Naive thymus-derived CD4-positive, alpha-beta T cell (primary cell): ENCODE measurements at regions of chr17 and their contacts with region 1.

Region 1: GRCh38 chr17:59155439-59156182 is at the start of gene PRR11:
- DNase-seq: peak in 6 of 9 donors; percentile 62 to 99 (median 98)
- ATAC-seq: peak; percentile 91
- H3K4me3 ChIP-seq: peak within 1 kb of the TSS; percentile 89
- H3K4me3 Mint-ChIP-seq: no peak within 1 kb of the TSS
- H3K27ac ChIP-seq: peak within 1 kb of the TSS; percentile 75
- H3K27ac Mint-ChIP-seq: no peak within 1 kb of the TSS
- H3K4me1 ChIP-seq: peaks cover 10 to 13% of the 10 kb centered on the region in 2 donors
- H3K4me1 Mint-ChIP-seq: peaks cover 8 to 52% (median 36%) of the 10 kb centered on the region in 7 donors
- H3K27me3 ChIP-seq: no peaks in the 10 kb centered on the region
- H3K27me3 Mint-ChIP-seq: no peaks in the 10 kb centered on the region
- total RNA-seq, gene PRR11: 0.61 to 41.9 (median 1.00) TPM

Region 2: GRCh38 chr17:58006924-58007780 is 1148.5 kb before region 1 on chr17 and contains the start of gene SRSF1:
- CTCF ChIA-PET with region 1: no interaction called
- POLR2A ChIA-PET with region 1: no interaction called
- intact Hi-C with region 1: loop called (anchors 2 to 5 kb)
- DNase-seq: peak; percentile 95 to 99 (median 98)
- ATAC-seq: peak; percentile 92
- H3K4me3 ChIP-seq: peak within 1 kb of the TSS; percentile 99
- H3K4me3 Mint-ChIP-seq: peak within 1 kb of the TSS; percentile 96 to 100 (median 99)
- H3K27ac ChIP-seq: peak within 1 kb of the TSS; percentile 93
- H3K27ac Mint-ChIP-seq: peak within 1 kb of the TSS; percentile 99 to 100 (median 99)
- H3K4me1 ChIP-seq: peaks cover 31 to 32% of the 10 kb centered on the region in 2 donors
- H3K4me1 Mint-ChIP-seq: peaks cover 33 to 60% (median 54%) of the 10 kb centered on the region in 7 donors
- H3K27me3 ChIP-seq: no peaks in the 10 kb centered on the region
- H3K27me3 Mint-ChIP-seq: peaks cover 0 to 3% (median 0%) of the 10 kb centered on the region in 5 donors
- total RNA-seq, gene SRSF1: 115 to 362 (median 249) TPM

Region 3: DNA sequence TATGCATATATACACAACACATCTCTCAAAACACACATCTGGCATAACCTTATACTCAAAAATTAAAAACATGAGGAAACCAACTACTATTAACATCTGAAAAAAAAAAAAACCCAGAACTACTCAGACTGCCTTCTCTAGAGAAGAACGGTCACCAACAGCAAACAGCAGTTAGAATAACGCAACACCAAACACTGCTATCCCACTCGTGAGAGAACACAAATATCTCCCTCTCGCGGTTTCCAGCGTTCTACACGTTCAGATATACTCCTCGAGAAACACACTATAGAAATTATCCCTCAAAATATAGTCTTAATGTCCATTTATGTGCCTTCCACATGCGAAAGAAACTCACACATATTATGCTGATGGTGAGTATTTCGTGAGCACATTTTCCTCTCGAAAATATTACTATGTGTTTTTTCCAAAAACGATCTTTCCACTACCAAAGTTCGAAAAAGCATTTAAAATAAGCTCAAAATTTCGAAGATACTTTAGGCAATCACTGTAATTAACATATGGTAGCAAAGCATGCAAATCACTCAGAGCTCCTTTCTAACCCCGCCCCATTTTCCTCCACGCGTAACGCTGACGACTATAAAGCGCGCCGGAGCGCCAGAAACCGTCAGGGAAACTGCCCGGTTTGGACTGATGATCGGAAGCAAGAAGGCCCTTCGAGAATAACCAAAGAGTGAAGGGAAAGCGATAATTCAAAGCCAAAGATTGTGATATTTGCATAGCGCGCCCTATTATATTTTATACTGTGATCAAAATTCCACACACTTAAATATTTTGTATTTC is 523.9 kb before region 1 on chr17:
- CTCF ChIA-PET with region 1: no interaction called
- POLR2A ChIA-PET with region 1: no interaction called
- intact Hi-C with region 1: loop called (anchors 1 to 2 kb)
- DNase-seq: peak; percentile 74 to 95 (median 92)
- ATAC-seq: peak; percentile 90
- H3K4me3 ChIP-seq: peak overlapping the region; percentile 46
- H3K4me3 Mint-ChIP-seq: no peak overlapping the region
- H3K27ac ChIP-seq: peak overlapping the region; percentile 78
- H3K27ac Mint-ChIP-seq: no peak overlapping the region
- H3K4me1 ChIP-seq: peaks cover 6 to 12% of the 10 kb centered on the region in 2 donors
- H3K4me1 Mint-ChIP-seq: peaks cover 0 to 9% (median 5%) of the 10 kb centered on the region in 7 donors
- H3K27me3 ChIP-seq: no peaks in the 10 kb centered on the region
- H3K27me3 Mint-ChIP-seq: peaks cover 0 to 2% (median 0%) of the 10 kb centered on the region in 5 donors

Region 4: GRCh38 chr17:59220376-59221158 is 65.0 kb after region 1 on chr17 and contains the start of gene GDPD1:
- CTCF ChIA-PET with region 1: no interaction called
- POLR2A ChIA-PET with region 1: interaction called, 3 read pairs
- intact Hi-C with region 1: loop called (anchors 1 kb)
- DNase-seq: peak; percentile 95 to 98 (median 97)
- ATAC-seq: peak; percentile 100
- H3K4me3 ChIP-seq: peak within 1 kb of the TSS; percentile 99
- H3K4me3 Mint-ChIP-seq: peak within 1 kb of the TSS; percentile 94 to 100 (median 98)
- H3K27ac ChIP-seq: peak within 1 kb of the TSS; percentile 92
- H3K27ac Mint-ChIP-seq: peak within 1 kb of the TSS; percentile 94 to 100 (median 98)
- H3K4me1 ChIP-seq: peaks cover 5 to 9% of the 10 kb centered on the region in 2 donors
- H3K4me1 Mint-ChIP-seq: peaks cover 5 to 16% (median 14%) of the 10 kb centered on the region in 7 donors
- H3K27me3 ChIP-seq: no peaks in the 10 kb centered on the region
- H3K27me3 Mint-ChIP-seq: peaks cover 0 to 5% (median 0%) of the 10 kb centered on the region in 5 donors
- total RNA-seq, gene GDPD1: 2.4 to 6.0 (median 3.8) TPM

Region 5: GRCh38 chr17:59506894-59507726 is 351.5 kb after region 1 on chr17:
- CTCF ChIA-PET with region 1: no interaction called
- POLR2A ChIA-PET with region 1: no interaction called
- intact Hi-C with region 1: no loop called
- DNase-seq: no peak
- ATAC-seq: no peak
- H3K4me3 ChIP-seq: no peak overlapping the region
- H3K4me3 Mint-ChIP-seq: no peak overlapping the region
- H3K27ac ChIP-seq: no peak overlapping the region
- H3K27ac Mint-ChIP-seq: no peak overlapping the region
- H3K4me1 ChIP-seq: no peaks in the 10 kb centered on the region
- H3K4me1 Mint-ChIP-seq: no peaks in the 10 kb centered on the region
- H3K27me3 ChIP-seq: no peaks in the 10 kb centered on the region
- H3K27me3 Mint-ChIP-seq: peaks cover 0 to 5% (median 4%) of the 10 kb centered on the region in 5 donors

Region 6: GRCh38 chr17:59707114-59707970 is 551.7 kb after region 1 on chr17 and contains the starts of genes PTRH2 and VMP1:
- CTCF ChIA-PET with region 1: no interaction called
- POLR2A ChIA-PET with region 1: no interaction called
- intact Hi-C with region 1: loop called in 1 of 2 experiments (anchors 5 kb)
- DNase-seq: peak; percentile 72 to 94 (median 83)
- ATAC-seq: peak; percentile 96
- H3K4me3 ChIP-seq: peak within 1 kb of the TSS; percentile 90
- H3K4me3 Mint-ChIP-seq: peak within 1 kb of the TSS; percentile 97 to 100 (median 99)
- H3K27ac ChIP-seq: peak within 1 kb of the TSS; percentile 90
- H3K27ac Mint-ChIP-seq: peak within 1 kb of the TSS; percentile 96 to 100 (median 99)
- H3K4me1 ChIP-seq: peaks cover 26 to 28% of the 10 kb centered on the region in 2 donors
- H3K4me1 Mint-ChIP-seq: peaks cover 39 to 86% (median 68%) of the 10 kb centered on the region in 7 donors
- H3K27me3 ChIP-seq: no peaks in the 10 kb centered on the region
- H3K27me3 Mint-ChIP-seq: no peaks in the 10 kb centered on the region
- total RNA-seq, gene PTRH2: 6.1 to 24.1 (median 15.0) TPM
- total RNA-seq, gene VMP1: 70.3 to 370 (median 82.5) TPM

Region 7: GRCh38 chr17:60677308-60678124 is 1521.9 kb after region 1 on chr17 and contains the start of gene BCAS3:
- CTCF ChIA-PET with region 1: no interaction called
- POLR2A ChIA-PET with region 1: no interaction called
- intact Hi-C with region 1: loop called in 1 of 2 experiments (anchors 10 kb)
- DNase-seq: peak; percentile 82 to 98 (median 97)
- ATAC-seq: peak; percentile 97
- H3K4me3 ChIP-seq: peak within 1 kb of the TSS; percentile 85
- H3K4me3 Mint-ChIP-seq: peak within 1 kb of the TSS; percentile 95 to 99 (median 98)
- H3K27ac ChIP-seq: peak within 1 kb of the TSS; percentile 84
- H3K27ac Mint-ChIP-seq: peak within 1 kb of the TSS; percentile 91 to 99 (median 96)
- H3K4me1 ChIP-seq: peaks cover 0 to 5% of the 10 kb centered on the region in 2 donors
- H3K4me1 Mint-ChIP-seq: peaks cover 10 to 30% (median 25%) of the 10 kb centered on the region in 7 donors
- H3K27me3 ChIP-seq: no peaks in the 10 kb centered on the region
- H3K27me3 Mint-ChIP-seq: no peaks in the 10 kb centered on the region
- total RNA-seq, gene BCAS3: 18.4 to 57.8 (median 42.3) TPM